ENCODE measurements at regions of chr1 and their contacts with region 1.

Region 1: DNA sequence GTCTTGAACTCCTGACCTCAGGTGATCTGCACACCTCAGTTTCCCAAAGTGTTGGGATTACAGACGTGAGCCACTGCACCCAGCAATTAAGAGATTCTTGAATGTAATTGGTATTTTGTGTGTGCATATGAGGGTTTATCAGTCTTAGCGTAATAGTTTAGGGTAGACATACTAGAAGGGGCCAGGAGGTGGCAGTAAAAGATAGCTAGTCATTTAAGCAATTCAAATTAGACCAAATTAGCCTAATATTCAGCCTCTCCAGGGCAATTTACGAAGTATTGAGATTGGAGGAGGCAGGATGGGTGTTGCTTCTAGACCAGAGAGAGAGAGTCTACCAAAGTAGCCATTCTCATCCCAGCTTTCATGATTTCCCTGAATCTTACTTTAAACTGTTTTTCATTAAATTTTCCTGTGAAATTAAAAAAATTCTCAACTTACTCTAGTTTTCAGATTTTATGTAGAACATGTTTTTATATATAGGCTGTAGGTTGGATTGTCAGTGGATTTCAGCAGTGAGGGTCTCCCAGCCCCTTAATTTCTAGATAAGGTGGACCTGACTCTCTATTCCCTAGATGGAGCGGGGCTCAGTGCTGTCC is 119.7 kb downstream of the HHAT start:
- DNase-seq: no peak
- H3K4me3 ChIP-seq: no peak overlapping the region
- H3K27ac ChIP-seq: no peak overlapping the region
- H3K4me1 ChIP-seq: peaks cover 0 to 5% (median 0%) of the 10 kb centered on the region in 4 experiments; a peak in 1 of 7 replicates
- H3K27me3 ChIP-seq: no peaks in the 10 kb centered on the region; a peak in 1 of 7 replicates
- CTCF ChIP-seq: peak in 2 of 3 experiments; percentile 55 to 76; a peak in 2 of 4 replicates
- EP300 ChIP-seq: no peak
- POLR2A ChIP-seq: no peak
- RAD21 ChIP-seq: peak; percentile 89 to 90

Region 2: GRCh38 chr1:210400043-210400840 is 48.2 kb before region 1 on chr1:
- CTCF ChIA-PET with region 1: interaction called, 29 read pairs
- POLR2A ChIA-PET with region 1: no interaction called
- DNase-seq: peak; percentile 7 to 78
- H3K4me3 ChIP-seq: no peak overlapping the region
- H3K27ac ChIP-seq: peak overlapping the region; percentile 34; the same call in 1 of the 2 replicates
- H3K4me1 ChIP-seq: no peaks in the 10 kb centered on the region
- H3K27me3 ChIP-seq: no peaks in the 10 kb centered on the region
- CTCF ChIP-seq: peak; percentile 48 to 98 (median 95)
- EP300 ChIP-seq: no peak
- POLR2A ChIP-seq: no peak
- RAD21 ChIP-seq: peak; percentile 88 to 94

Region 3: DNA sequence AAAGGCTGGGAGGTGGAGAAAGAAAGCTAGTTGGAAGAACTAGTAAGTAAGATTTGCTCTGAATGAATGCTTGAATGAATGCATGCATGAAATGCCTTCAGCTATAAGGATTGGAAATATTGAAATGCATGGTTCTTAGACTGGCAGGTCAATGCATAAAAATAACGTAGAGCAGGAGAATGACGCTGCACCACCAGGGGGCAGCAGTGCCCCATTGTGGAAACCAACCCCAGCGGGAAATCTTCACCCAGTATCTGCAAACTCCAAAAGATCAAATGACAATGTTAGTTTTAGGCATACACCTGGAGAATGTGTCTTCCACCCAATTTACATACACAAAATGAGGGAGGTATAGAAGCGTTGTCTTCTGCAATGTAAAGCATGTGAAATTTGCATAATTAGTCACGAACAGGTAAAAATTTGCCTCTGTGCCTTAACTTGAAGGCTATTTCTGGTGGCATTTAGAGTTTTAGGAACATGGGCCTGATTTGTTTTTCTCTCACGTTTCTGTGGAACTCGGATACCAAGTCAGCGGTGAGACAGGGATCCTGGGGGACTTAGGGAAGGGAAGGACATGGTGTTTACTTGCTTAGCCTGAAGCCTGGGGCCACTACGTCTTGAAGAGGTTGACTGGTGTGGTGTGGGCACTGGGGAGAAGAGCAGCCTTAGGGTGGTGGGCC is 41.0 kb before region 1 on chr1:
- CTCF ChIA-PET with region 1: interaction called, 29 read pairs
- POLR2A ChIA-PET with region 1: no interaction called
- DNase-seq: peak; percentile 41 to 95
- H3K4me3 ChIP-seq: no peak overlapping the region
- H3K27ac ChIP-seq: no peak overlapping the region
- H3K4me1 ChIP-seq: peaks cover 0 to 6% (median 2%) of the 10 kb centered on the region in 4 experiments; a peak in 3 of 7 replicates
- H3K27me3 ChIP-seq: no peaks in the 10 kb centered on the region
- CTCF ChIP-seq: peak; percentile 79 to 85 (median 84)
- EP300 ChIP-seq: no peak
- POLR2A ChIP-seq: no peak
- RAD21 ChIP-seq: peak; percentile 93 to 94

Region 4: GRCh38 chr1:210415846-210416448 is 32.4 kb before region 1 on chr1:
- CTCF ChIA-PET with region 1: interaction called, 24 read pairs
- POLR2A ChIA-PET with region 1: no interaction called
- DNase-seq: no peak
- H3K4me3 ChIP-seq: no peak overlapping the region
- H3K27ac ChIP-seq: no peak overlapping the region
- H3K4me1 ChIP-seq: peaks cover 2 to 6% (median 3%) of the 10 kb centered on the region in 4 experiments; a peak in 3 of 7 replicates
- H3K27me3 ChIP-seq: no peaks in the 10 kb centered on the region
- CTCF ChIP-seq: peak in 2 of 3 experiments; percentile 12 to 30; a peak in 2 of 4 replicates
- EP300 ChIP-seq: no peak
- POLR2A ChIP-seq: no peak
- RAD21 ChIP-seq: peak in 1 of 2 experiments; percentile 35; a peak in 2 of 4 replicates

Region 5: DNA sequence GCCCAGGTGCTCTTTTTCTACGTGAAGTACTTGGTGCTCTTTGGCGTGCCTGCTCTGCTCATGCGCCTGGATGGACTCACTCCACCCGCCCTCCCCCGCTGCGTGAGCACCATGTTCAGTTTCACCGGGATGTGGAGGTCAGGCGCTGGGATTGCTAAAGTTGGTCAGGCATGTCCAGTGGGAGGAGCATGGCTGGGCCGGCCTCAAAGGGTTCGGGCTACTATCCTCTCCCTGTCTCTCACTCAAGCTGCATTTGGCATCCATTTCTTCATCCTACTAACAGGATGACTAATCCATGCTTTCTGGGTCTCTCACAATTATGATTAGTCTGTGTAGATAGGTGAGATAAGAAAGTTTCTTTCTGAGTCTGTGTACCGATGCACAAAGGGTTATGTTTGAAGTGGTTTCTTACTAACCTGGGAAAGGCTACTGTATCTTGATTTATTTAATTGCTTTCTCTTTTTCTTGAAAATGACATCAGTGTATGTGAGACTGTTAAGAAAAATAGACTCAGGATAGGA is 16.2 kb after region 1 on chr1:
- CTCF ChIA-PET with region 1: interaction called, 21 read pairs
- POLR2A ChIA-PET with region 1: no interaction called
- DNase-seq: no peak
- H3K4me3 ChIP-seq: no peak overlapping the region
- H3K27ac ChIP-seq: no peak overlapping the region
- H3K4me1 ChIP-seq: peaks cover 0 to 2% (median 0%) of the 10 kb centered on the region in 4 experiments; a peak in 1 of 7 replicates
- H3K27me3 ChIP-seq: no peaks in the 10 kb centered on the region
- CTCF ChIP-seq: no peak
- EP300 ChIP-seq: no peak
- POLR2A ChIP-seq: no peak
- RAD21 ChIP-seq: no peak

Region 6: GRCh38 chr1:210584439-210585113 is 136.2 kb after region 1 on chr1:
- CTCF ChIA-PET with region 1: interaction called, 86 read pairs
- POLR2A ChIA-PET with region 1: no interaction called
- DNase-seq: peak; percentile 63 to 91
- H3K4me3 ChIP-seq: no peak overlapping the region
- H3K27ac ChIP-seq: no peak overlapping the region
- H3K4me1 ChIP-seq: peaks cover 0 to 3% (median 0%) of the 10 kb centered on the region in 4 experiments; a peak in 1 of 7 replicates
- H3K27me3 ChIP-seq: no peaks in the 10 kb centered on the region
- CTCF ChIP-seq: peak; percentile 64 to 95 (median 90)
- EP300 ChIP-seq: no peak
- POLR2A ChIP-seq: no peak
- RAD21 ChIP-seq: peak; percentile 98 to 100

Measured in H1 (cell line).